Activated CD8-positive, alpha-beta T cell treated with anti-CD3 and anti-CD28 coated beads for 36 hours (primary cell): ENCODE measurements at regions of chr1 and their contacts with region 1.

Region 1: GRCh38 chr1:199243423-199244061 is 604.7 kb downstream of the PTPRC start:
- DNase-seq: peak; percentile 84
- ATAC-seq: peak; percentile 100
- H3K4me3 Mint-ChIP-seq: no peak overlapping the region
- H3K27ac Mint-ChIP-seq: no peak overlapping the region
- H3K4me1 Mint-ChIP-seq: peaks cover 4% of the 10 kb centered on the region
- H3K27me3 Mint-ChIP-seq: peaks cover 4% of the 10 kb centered on the region
- CTCF ChIP-seq: peak; percentile 83

Region 2: DNA sequence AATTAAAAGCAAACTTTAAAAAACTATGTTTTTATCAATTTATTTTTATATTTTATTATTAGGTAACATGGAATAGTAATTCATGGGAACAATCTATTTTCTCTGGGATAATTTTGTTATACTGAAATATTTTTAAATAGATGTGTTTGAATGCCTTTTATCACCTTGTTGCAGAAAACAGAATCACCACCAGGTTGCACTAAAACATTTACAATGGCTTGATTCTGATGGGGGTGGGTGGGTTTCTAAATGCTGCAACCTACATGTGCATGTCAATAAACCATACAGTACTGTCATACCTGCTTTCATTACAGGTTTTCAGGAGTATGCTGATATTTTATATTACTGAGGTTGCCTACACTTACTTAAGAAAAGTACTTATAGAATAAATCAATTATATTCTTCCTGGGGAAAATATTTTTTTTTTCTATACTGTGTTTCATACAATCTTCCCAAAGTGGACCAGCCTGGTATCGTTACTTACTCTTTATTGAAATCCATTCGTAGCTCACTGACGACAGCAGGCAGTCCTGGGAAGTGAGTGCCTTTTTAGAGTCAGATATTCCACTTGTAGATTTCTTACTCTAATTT is 471.9 kb before region 1 on chr1:
- CTCF ChIA-PET with region 1: no interaction called
- POLR2A ChIA-PET with region 1: no interaction called
- intact Hi-C with region 1: loop called (anchors 10 kb)
- DNase-seq: peak; percentile 42
- ATAC-seq: peak; percentile 68
- H3K4me3 Mint-ChIP-seq: no peak overlapping the region
- H3K27ac Mint-ChIP-seq: no peak overlapping the region
- H3K4me1 Mint-ChIP-seq: peaks cover 5% of the 10 kb centered on the region
- H3K27me3 Mint-ChIP-seq: peaks cover 2% of the 10 kb centered on the region
- CTCF ChIP-seq: peak; percentile 68

Region 3: DNA sequence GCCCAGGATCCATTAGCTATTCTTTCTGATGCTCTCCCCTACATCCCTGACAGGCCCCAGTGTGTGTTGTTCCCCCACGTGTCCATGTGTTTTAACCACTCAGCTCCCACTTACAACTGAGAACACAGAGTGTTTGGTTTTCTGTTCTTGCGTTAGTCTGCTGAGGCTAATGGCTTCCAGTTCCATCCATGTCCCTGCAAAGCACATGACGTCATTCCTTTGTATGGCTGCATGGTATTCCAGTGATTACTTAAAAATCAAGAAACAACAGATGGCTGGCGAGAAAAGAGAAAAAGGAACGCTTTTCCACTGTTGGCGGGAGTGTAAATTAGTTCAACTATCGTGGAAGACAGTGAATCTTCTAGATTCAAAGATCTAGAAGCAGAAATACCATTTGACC is 48.7 kb before region 1 on chr1:
- CTCF ChIA-PET with region 1: no interaction called
- POLR2A ChIA-PET with region 1: no interaction called
- intact Hi-C with region 1: no loop called
- DNase-seq: no peak
- ATAC-seq: no peak
- H3K4me3 Mint-ChIP-seq: no peak overlapping the region
- H3K27ac Mint-ChIP-seq: no peak overlapping the region
- H3K4me1 Mint-ChIP-seq: no peaks in the 10 kb centered on the region
- H3K27me3 Mint-ChIP-seq: no peaks in the 10 kb centered on the region
- CTCF ChIP-seq: no peak